CD14-positive monocyte (primary cell): ENCODE measurements at regions of chr6 and their contacts with region 1.

Region 1: GRCh38 chr6:32177788-32178546 is at the start of gene RNF5:
- DNase-seq: peak; percentile 98 to 99 (median 99)
- H3K4me3 ChIP-seq: peak within 1 kb of the TSS; percentile 57 to 94 (median 82)
- H3K4me3 Mint-ChIP-seq: peak within 1 kb of the TSS; percentile 90 to 98
- H3K27ac ChIP-seq: peak within 1 kb of the TSS; percentile 89 to 90
- H3K27ac Mint-ChIP-seq: peak within 1 kb of the TSS; percentile 96 to 100 (median 100)
- H3K4me1 ChIP-seq: peaks cover 60 to 73% of the 10 kb centered on the region in 2 donors
- H3K4me1 Mint-ChIP-seq: peaks cover 83% of the 10 kb centered on the region
- H3K27me3 ChIP-seq: no peaks in the 10 kb centered on the region
- H3K27me3 Mint-ChIP-seq: peaks cover 0 to 4% (median 0%) of the 10 kb centered on the region in 3 donors
- CTCF ChIP-seq: no peak
- polyA plus RNA-seq, gene RNF5: 62.2 to 108 (median 83.5) TPM

Region 2: DNA sequence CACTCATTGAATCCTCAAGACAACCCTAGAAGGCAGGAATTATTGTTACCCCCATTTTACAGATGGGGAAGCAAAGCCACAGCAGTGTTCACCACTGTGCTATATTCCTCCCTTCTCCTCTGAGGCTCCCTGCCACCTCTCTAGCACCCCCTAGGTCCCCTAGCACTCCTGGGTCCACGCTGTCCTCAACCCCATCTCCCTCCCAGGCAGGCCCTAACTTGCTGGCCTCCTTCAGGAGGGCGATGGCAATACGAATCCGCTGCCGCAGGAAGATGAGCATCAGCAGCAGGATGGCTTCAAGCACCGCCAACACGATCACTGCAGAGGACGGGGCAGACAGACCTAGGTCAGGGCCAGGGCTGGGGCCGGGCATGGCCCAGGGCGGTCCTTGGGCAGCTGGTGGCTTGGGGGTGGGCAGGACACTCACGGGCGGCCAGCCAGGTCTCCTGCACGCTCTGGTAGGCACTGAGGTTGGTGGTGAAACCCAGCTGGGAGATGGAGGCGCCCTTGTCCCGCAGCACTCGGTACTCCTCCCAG is 307.5 kb before region 1 on chr6:
- intact Hi-C with region 1: no loop called
- DNase-seq: no peak
- H3K4me3 ChIP-seq: no peak overlapping the region
- H3K4me3 Mint-ChIP-seq: no peak overlapping the region
- H3K27ac ChIP-seq: no peak overlapping the region
- H3K27ac Mint-ChIP-seq: peak overlapping the region in 1 of 7 donors; percentile 11
- H3K4me1 ChIP-seq: no peaks in the 10 kb centered on the region
- H3K4me1 Mint-ChIP-seq: no peaks in the 10 kb centered on the region
- H3K27me3 ChIP-seq: no peaks in the 10 kb centered on the region
- H3K27me3 Mint-ChIP-seq: peaks cover 1 to 6% (median 4%) of the 10 kb centered on the region in 3 donors
- CTCF ChIP-seq: no peak

Region 3: GRCh38 chr6:32118782-32119628 is 59.0 kb before region 1 on chr6:
- intact Hi-C with region 1: loop called in 1 of 2 experiments (anchors 5 kb)
- DNase-seq: peak; percentile 59 to 73 (median 68)
- H3K4me3 ChIP-seq: no peak overlapping the region
- H3K4me3 Mint-ChIP-seq: no peak overlapping the region
- H3K27ac ChIP-seq: peak overlapping the region in 1 of 2 donors; percentile 63
- H3K27ac Mint-ChIP-seq: peak overlapping the region in 5 of 7 donors; percentile 57 to 87 (median 75)
- H3K4me1 ChIP-seq: peaks cover 7 to 14% of the 10 kb centered on the region in 2 donors
- H3K4me1 Mint-ChIP-seq: peaks cover 16% of the 10 kb centered on the region
- H3K27me3 ChIP-seq: no peaks in the 10 kb centered on the region
- H3K27me3 Mint-ChIP-seq: peaks cover 0 to 5% (median 0%) of the 10 kb centered on the region in 3 donors
- CTCF ChIP-seq: peak; percentile 91

Region 4: DNA sequence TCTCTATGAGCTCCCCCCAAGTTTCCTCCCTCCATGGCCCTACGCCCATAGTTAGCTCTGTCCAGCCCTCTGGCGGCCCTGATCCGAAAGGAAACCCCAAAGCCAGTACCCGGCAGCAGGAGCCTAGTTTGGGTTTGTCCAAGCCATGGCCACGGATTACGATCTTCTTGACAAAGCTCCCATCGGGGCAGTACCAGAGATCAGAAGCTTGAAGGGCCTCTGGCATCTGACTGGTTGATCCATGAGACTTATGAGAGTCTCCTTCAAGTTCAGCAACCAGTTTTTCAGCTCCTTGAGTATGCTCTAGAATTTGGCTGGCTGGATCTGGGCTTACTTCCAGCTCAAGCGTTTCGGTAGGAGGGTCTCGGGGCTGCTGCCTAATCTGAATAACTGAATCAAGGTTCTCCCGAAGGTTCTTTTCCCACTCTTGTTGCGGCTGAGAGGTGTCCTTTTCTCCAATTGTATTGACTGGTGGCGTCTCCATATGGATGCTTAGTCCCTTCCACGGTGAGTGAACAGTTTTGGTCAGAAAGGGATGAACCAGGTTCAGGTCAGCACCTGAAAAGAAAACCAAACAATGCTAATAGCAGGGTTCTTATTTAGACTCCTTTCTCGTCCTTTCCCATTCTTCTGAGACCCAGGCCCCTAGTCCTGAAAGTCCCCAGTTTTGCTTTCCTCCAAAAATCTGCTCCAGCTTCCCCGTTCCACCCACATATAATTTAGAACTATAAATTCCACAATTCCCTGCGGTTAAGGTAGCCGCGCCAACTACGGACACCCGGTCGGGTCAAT is 48.5 kb before region 1 on chr6:
- intact Hi-C with region 1: loop called (anchors 1 to 5 kb)
- DNase-seq: no peak
- H3K4me3 ChIP-seq: peak overlapping the region; percentile 56 to 100 (median 71)
- H3K4me3 Mint-ChIP-seq: peak overlapping the region; percentile 88 to 90
- H3K27ac ChIP-seq: peak overlapping the region; percentile 21 to 98
- H3K27ac Mint-ChIP-seq: peak overlapping the region; percentile 90 to 98 (median 95)
- H3K4me1 ChIP-seq: peaks cover 30 to 36% of the 10 kb centered on the region in 2 donors
- H3K4me1 Mint-ChIP-seq: peaks cover 28% of the 10 kb centered on the region
- H3K27me3 ChIP-seq: no peaks in the 10 kb centered on the region
- H3K27me3 Mint-ChIP-seq: peaks cover 3 to 5% (median 4%) of the 10 kb centered on the region in 3 donors
- CTCF ChIP-seq: no peak

Region 5: GRCh38 chr6:32148289-32149091 is 29.5 kb before region 1 on chr6:
- intact Hi-C with region 1: loop called in 1 of 2 experiments (anchors 1 kb)
- DNase-seq: peak; percentile 77 to 86 (median 78)
- H3K4me3 ChIP-seq: peak overlapping the region; percentile 41 to 75 (median 49)
- H3K4me3 Mint-ChIP-seq: peak overlapping the region; percentile 87 to 95
- H3K27ac ChIP-seq: no peak overlapping the region
- H3K27ac Mint-ChIP-seq: peak overlapping the region in 5 of 7 donors; percentile 58 to 83 (median 77)
- H3K4me1 ChIP-seq: peaks cover 17 to 20% of the 10 kb centered on the region in 2 donors
- H3K4me1 Mint-ChIP-seq: peaks cover 24% of the 10 kb centered on the region
- H3K27me3 ChIP-seq: peaks cover 36 to 67% of the 10 kb centered on the region in 2 donors
- H3K27me3 Mint-ChIP-seq: peaks cover 60 to 72% (median 65%) of the 10 kb centered on the region in 3 donors
- CTCF ChIP-seq: peak; percentile 70

Region 6: GRCh38 chr6:32153564-32154513 is 24.1 kb before region 1 on chr6 and contains the start of gene PPT2:
- intact Hi-C with region 1: loop called in 1 of 2 experiments (anchors 2 kb)
- DNase-seq: peak; percentile 23 to 37 (median 28)
- H3K4me3 ChIP-seq: peak within 1 kb of the TSS; percentile 51 to 84 (median 56)
- H3K4me3 Mint-ChIP-seq: peak within 1 kb of the TSS; percentile 97 to 100
- H3K27ac ChIP-seq: no peak within 1 kb of the TSS
- H3K27ac Mint-ChIP-seq: peak within 1 kb of the TSS in 5 of 7 donors; percentile 10 to 90 (median 61)
- H3K4me1 ChIP-seq: peaks cover 24 to 26% of the 10 kb centered on the region in 2 donors
- H3K4me1 Mint-ChIP-seq: peaks cover 30% of the 10 kb centered on the region
- H3K27me3 ChIP-seq: peaks cover 28 to 51% of the 10 kb centered on the region in 2 donors
- H3K27me3 Mint-ChIP-seq: peaks cover 45 to 63% (median 55%) of the 10 kb centered on the region in 3 donors
- CTCF ChIP-seq: no peak
- polyA plus RNA-seq, gene PPT2: 1.4 to 4.0 (median 1.8) TPM

Region 7: DNA sequence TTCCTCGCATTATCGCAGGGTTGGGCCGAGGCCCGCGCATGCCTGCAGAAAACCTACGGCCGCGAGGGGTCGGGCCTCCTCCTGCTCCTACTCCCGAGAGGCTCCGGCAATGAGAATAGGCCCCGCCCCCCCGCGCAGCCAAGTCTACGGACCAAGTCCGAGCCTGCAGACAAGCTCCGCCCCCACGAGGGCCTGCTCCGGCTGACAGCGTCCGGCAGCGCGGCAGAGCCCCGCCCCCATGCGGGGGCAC is 17.6 kb after region 1 on chr6:
- intact Hi-C with region 1: loop called (anchors 1 to 2 kb)
- DNase-seq: peak; percentile 100
- H3K4me3 ChIP-seq: peak overlapping the region in 2 of 3 experiments; percentile 46 to 98
- H3K4me3 Mint-ChIP-seq: peak overlapping the region in 1 of 2 donors; percentile 84
- H3K27ac ChIP-seq: peak overlapping the region; percentile 98 to 99
- H3K27ac Mint-ChIP-seq: peak overlapping the region; percentile 98 to 100 (median 100)
- H3K4me1 ChIP-seq: peaks cover 53 to 62% of the 10 kb centered on the region in 2 donors
- H3K4me1 Mint-ChIP-seq: peaks cover 56% of the 10 kb centered on the region
- H3K27me3 ChIP-seq: no peaks in the 10 kb centered on the region
- H3K27me3 Mint-ChIP-seq: peaks cover 0 to 10% (median 2%) of the 10 kb centered on the region in 3 donors
- CTCF ChIP-seq: no peak